Cardiac septum (tissue), 1 donor: ENCODE measurements at regions of chr6 and their contacts with region 1.

Region 1: DNA sequence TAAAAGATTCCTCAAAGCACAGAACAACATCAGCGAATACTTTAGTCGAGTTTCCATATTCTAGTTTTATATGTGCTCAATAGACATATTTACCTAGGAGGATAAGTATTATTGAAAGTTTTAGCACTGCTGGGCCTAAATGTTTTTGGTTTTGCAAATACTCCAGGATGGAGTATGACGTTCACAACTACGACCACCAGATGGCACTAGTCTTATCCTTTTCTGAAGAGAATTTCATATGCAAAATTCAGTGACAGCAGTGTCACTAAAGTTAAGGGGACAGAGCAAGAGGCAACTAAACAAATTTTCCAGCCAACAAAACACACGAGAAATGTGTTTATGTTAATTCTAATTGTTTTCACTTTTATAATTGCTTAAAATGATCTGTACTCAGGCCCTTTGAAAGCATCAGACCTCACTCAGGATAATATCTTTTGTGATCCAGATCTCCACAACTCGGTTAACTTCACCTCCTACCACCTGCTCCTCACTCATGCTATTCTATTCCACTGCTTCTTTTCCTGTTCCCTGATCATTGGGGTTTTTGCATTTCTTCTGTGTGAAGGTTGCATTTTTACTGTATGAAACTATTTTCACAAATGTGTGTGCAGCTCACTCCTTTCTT is 220.8 kb downstream of the TRDN start:
- DNase-seq: no peak

Region 2: DNA sequence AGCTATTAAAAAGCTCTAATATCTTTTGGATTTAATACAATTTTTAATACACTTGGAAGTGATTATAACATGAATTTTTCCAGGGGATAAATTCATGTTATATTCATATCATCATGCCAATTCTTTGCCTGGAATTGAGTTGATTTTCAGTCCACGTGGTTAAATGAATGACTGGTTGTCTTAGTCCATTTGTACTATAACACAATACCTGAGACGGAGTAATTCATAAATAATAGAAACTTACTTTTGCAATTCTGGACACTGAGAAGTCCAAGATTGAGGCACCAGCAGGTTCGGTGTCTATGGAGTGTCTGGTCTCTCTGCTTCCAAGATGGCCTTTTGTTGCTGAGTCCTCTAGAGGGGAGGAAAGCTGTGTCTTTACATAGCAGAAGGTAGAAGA is 287.0 kb after region 1 on chr6:
- intact Hi-C with region 1: no loop called
- DNase-seq: no peak

Region 3: DNA sequence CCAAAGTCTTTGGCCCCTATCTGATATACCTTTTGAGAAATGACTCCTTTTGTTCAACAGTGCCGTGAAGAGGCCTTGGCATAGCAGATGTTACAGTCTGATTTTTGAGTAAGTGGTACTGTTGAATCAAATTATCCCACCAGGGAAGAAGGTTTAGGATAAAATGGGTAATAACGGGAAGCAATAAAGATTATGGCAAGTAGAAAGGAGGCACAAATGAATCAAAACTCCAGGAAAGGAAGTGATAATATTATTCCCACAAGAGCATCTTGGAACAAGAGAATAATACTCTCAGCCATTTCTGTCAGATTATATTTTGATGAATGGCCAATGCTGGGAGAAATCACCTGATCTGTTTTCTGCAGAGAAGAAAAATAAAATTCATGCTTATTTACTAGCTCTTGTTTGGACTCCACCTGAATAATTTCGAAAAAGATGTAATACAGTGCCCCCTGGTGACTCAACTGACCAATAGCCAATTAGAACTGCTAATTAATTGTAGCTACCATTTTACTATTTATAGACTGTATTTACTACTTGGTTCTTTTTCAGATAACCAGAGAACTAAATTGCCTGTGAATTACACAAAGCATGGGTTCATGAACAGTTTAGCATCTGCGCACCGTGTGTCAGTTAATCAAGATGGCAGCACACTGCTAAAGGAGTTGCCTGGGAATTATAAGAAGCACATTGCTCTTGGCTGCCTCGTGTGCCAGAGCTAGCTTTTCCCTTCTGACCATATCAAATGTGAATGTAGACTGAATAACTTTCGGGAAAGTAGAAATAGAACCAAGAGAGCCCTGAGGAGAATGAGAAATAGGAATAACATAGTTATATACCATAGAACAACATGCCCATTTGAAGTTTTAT is 299.3 kb after region 1 on chr6:
- intact Hi-C with region 1: loop called (anchors 1 kb)
- DNase-seq: no peak